Heart right ventricle (tissue), 16 donors: ENCODE measurements at regions of chr22 and their contacts with region 1.

Region 1: GRCh38 chr22:23376256-23376655 is 195.9 kb downstream of the BCR start:
- DNase-seq: no peak
- ATAC-seq: no peak
- H3K4me3 ChIP-seq: no peak overlapping the region
- H3K27ac ChIP-seq: no peak overlapping the region
- H3K4me1 ChIP-seq: no peaks in the 10 kb centered on the region
- H3K27me3 ChIP-seq: peaks cover 0 to 29% (median 7%) of the 10 kb centered on the region in 7 donors
- CTCF ChIP-seq: peak in 3 of 9 donors; percentile 20 to 29 (median 20)

Region 2: GRCh38 chr22:23322547-23322946 is 53.7 kb before region 1 on chr22:
- intact Hi-C with region 1: loop called in 1 of 10 experiments (anchors 5 kb)
- DNase-seq: no peak
- ATAC-seq: no peak
- H3K4me3 ChIP-seq: no peak overlapping the region
- H3K27ac ChIP-seq: no peak overlapping the region
- H3K4me1 ChIP-seq: no peaks in the 10 kb centered on the region
- H3K27me3 ChIP-seq: no peaks in the 10 kb centered on the region
- CTCF ChIP-seq: no peak

Region 3: DNA sequence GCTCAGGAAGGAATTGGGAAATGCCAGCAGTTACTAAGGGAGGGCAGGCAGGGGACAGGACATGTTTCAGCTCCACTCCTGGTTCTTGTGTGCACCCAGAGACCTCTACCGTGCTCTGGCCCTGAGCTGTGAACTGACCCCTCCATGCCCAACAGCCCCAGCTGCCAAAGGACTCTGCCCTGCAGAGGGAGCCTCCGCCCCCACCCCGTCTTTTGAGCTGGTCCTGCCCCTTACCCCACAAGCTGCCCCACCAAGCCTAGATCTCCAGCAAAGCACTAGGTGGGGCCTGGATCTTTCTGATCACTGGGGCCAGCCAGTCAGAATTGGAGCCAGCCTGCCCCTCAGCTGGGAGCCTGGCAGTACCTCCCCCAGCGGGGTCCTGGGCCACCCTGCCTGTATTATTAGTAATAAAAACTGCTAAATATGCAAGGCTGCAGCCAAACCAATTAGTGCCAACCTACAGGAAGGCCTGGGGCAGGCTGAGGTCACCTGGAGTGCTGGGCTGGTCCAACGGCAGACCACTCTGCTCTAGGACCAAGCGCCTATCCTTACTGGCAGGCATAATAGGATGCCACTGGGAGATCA is 279.7 kb after region 1 on chr22:
- intact Hi-C with region 1: no loop called
- DNase-seq: no peak
- ATAC-seq: no peak
- H3K4me3 ChIP-seq: no peak overlapping the region
- H3K27ac ChIP-seq: no peak overlapping the region
- H3K4me1 ChIP-seq: no peaks in the 10 kb centered on the region
- H3K27me3 ChIP-seq: no peaks in the 10 kb centered on the region
- CTCF ChIP-seq: no peak